Right ventricle myocardium superior (tissue), 1 donor: ENCODE measurements at regions of chr9 and their contacts with region 1.

Region 1: DNA sequence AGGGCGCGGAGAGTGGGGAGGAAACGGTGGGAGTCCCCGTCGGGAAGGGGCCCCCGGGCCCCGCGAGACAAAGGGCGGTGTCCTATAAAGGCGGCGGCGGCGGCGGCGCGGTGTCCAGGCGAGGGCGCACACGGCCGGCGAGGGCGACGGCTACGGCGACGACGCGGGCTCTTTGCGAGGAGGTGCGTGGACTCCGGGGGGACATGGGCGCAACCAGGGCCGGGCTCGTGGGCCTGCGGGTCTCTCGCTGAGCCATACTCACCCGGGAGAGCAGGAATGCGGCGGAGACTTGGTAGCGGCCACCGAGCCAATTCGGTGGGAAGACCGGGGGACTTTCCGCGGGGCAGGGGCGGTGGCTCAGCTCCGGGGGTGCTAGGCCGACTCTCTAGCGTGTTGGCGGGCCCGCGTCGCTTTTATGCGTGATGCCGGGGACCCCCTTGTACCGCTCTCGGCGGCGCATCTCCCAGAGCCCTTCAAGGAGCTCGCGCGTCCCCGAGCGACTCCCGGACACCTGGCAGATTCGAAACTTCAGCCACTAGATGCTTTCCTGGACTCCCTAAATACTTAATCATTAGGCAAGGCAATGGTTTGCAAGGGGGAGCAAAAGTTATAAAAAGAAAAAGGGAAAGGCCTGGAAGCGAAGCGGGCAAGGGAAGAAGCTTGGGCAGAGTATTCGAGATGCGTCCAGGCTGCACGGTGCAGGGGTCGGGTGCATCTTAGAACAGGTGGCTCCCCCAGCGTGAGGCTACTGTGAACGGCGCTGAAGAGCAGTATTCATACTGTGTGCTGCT is 5.9 kb upstream of the TAL2 start:
- DNase-seq: peak; percentile 57
- ATAC-seq: peak; percentile 97

Region 2: DNA sequence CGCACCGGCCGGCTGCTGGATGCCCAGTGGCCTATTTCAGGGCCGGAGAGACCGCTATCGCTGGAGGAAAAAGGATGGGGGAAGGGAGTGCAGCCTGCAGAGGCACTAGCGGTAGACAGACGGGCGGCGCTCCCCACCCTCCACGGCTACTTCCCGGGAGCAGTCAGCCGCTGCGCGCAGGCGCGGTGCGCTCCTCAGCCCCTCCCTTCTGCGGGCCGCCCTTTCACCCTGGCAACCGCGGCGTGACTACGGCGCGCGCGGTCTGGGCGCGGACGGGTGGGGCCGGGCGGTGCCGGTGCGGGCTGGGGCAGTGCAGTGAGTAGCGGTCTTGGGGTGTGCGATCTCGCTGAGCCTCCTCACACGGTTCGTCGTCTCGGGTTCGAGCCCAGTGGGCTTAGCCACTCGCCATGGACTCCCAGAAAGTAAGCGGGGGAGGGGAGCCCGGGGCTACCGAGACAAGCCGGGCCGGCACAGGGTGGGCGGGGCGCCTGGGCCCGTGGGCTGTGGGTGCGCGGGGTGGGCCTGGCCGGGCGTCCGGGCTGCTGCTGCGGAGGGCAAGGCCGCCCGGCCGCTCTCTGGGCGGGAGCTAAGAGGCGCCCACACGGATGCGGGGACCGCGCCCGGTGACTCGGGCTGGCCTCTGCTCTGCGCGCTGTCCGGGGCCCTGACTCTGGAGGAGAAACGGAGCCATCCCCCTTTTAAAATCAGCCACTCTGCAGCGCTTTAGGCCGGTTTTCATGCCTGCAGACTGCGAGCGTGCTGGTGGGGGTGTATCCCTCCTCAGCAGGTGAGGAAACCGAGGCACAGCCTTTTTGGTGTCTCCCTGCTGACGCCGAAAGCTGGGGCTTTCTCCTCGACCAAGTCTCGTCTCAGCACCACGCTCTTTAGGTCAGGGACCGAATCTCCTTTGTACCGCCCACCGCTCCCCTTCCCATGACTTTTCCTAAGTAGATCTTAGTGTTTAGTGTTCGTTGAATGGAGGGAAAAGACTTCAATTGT is 208.2 kb before region 1 on chr9 and contains the start of gene FSD1L:
- intact Hi-C with region 1: no loop called
- DNase-seq: peak; percentile 97
- ATAC-seq: peak; percentile 99
- total RNA-seq, gene FSD1L: 5.5 TPM

Region 3: GRCh38 chr9:105621001-105621400 is 35.3 kb before region 1 on chr9:
- intact Hi-C with region 1: no loop called
- DNase-seq: no peak
- ATAC-seq: no peak

Region 4: GRCh38 chr9:105722099-105722498 is 65.8 kb after region 1 on chr9:
- intact Hi-C with region 1: loop called (anchors 5 kb)
- DNase-seq: no peak
- ATAC-seq: no peak